ENCODE measurements at regions of chr3 and their contacts with region 1.

Region 1: GRCh38 chr3:184711493-184712247 is at the start of gene MAGEF1:
- DNase-seq: peak; percentile 92
- H3K4me3 ChIP-seq: peak within 1 kb of the TSS; percentile 75
- H3K27ac ChIP-seq: peak within 1 kb of the TSS; percentile 89
- H3K4me1 ChIP-seq: peaks cover 25% of the 10 kb centered on the region
- H3K27me3 ChIP-seq: no peaks in the 10 kb centered on the region
- CTCF ChIP-seq: no peak
- total RNA-seq, gene MAGEF1: 47.6 and 51.2 TPM in 2 replicates

Region 2: DNA sequence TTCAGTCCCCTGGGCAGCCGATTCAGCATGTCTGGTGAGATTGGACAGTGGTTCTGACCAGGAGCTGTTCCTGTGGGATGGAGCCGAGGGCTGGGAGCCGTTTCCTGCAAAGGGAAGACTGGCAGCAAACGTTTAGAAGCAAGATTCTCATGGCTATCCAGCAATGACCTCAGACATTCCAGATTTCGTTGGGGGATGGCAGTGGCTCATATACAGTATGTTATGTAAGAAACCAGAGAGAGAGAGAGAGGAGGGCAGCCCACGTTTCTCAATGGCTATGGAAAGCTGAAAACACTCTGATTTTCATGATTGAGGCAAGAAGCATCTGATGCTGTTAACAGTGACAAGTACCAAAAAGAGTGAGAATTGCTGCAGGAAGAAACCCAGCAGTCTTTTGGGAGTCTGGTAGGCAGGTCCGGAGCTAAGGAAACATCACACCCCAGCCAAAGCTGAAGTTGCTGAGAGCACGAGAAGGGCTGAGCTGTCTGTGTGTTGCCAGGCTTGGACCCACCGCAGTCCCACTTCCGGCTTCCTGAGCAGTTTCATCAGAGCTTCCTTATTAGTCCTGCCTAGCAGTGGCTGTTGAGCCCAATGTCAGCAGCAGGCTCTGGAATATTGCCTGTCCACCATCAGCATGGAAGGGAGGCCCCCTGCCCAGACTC is 74.7 kb after region 1 on chr3:
- CTCF ChIA-PET with region 1: interaction called, 3 read pairs
- POLR2A ChIA-PET with region 1: interaction called, 3 read pairs
- intact Hi-C with region 1: loop called (anchors 2 kb)
- DNase-seq: peak; percentile 76
- H3K4me3 ChIP-seq: no peak overlapping the region
- H3K27ac ChIP-seq: peak overlapping the region; percentile 71
- H3K4me1 ChIP-seq: peaks cover 29% of the 10 kb centered on the region
- H3K27me3 ChIP-seq: no peaks in the 10 kb centered on the region
- CTCF ChIP-seq: no peak

Region 3: GRCh38 chr3:184796556-184797342 is 85.1 kb after region 1 on chr3:
- CTCF ChIA-PET with region 1: no interaction called
- POLR2A ChIA-PET with region 1: no interaction called
- intact Hi-C with region 1: no loop called
- DNase-seq: no peak
- H3K4me3 ChIP-seq: no peak overlapping the region
- H3K27ac ChIP-seq: no peak overlapping the region
- H3K4me1 ChIP-seq: no peaks in the 10 kb centered on the region
- H3K27me3 ChIP-seq: no peaks in the 10 kb centered on the region
- CTCF ChIP-seq: no peak